ENCODE measurements at regions of chr10 and their contacts with region 1.

Region 1: GRCh38 chr10:44932517-44933450 is 21.6 kb downstream of the TMEM72 start:
- DNase-seq: peak; percentile 96
- H3K4me3 Mint-ChIP-seq: no peak overlapping the region
- H3K27ac Mint-ChIP-seq: no peak overlapping the region
- H3K4me1 Mint-ChIP-seq: peaks cover 7% of the 10 kb centered on the region
- H3K27me3 Mint-ChIP-seq: peaks cover 6% of the 10 kb centered on the region

Region 2: DNA sequence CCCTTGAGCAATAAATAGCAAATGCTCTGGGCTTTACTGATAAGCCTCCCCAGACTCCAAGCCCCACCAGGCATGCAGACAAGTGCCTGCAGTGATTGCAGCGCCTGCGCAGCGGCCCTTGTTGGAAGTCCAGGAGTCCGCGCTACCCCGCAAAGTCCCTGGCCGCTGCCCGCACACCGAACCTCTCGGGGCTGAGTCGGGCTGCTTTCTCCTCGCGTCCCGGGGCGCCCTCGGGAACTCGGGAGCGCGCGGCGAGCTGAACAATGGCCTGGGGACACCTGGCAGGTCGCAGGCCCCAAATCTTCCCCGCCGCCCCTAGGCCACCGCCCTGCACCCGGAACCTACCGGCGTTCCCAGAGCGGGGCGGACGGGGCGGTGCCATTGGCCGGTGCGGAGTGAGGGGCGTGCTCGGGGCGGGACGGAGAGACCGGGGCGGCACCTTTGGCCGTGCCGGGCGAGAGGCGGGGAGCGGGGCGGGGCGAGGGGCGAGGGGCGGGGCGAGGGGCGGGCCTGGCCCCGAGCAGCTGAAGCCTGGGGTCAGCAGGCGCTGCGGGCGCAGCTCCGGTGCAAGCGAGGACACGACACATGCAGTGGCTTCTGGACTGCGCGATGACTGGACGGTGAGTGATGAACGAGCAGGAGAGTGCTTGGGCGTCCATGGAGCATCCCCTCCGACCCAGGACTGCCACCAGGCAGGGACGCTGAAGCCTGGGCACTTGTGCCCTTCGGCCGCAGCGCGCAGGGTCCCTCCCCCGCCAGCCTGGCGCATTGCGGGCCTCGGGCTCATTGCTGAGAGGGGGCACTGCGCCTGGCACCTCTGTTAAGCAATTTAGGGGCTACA is 26.7 kb after region 1 on chr10 and contains the start of gene RASSF4:
- intact Hi-C with region 1: loop called (anchors 2 kb)
- DNase-seq: peak; percentile 99
- H3K4me3 Mint-ChIP-seq: peak within 1 kb of the TSS; percentile 84
- H3K27ac Mint-ChIP-seq: peak within 1 kb of the TSS; percentile 51
- H3K4me1 Mint-ChIP-seq: peaks cover 13% of the 10 kb centered on the region
- H3K27me3 Mint-ChIP-seq: no peaks in the 10 kb centered on the region
- total RNA-seq, gene RASSF4: 1.3 and 1.5 TPM in 2 replicates

Region 3: GRCh38 chr10:44974628-44975431 is 42.0 kb after region 1 on chr10:
- intact Hi-C with region 1: loop called (anchors 1 kb)
- DNase-seq: peak; percentile 93
- H3K4me3 Mint-ChIP-seq: peak overlapping the region; percentile 77
- H3K27ac Mint-ChIP-seq: peak overlapping the region; percentile 80
- H3K4me1 Mint-ChIP-seq: peaks cover 22% of the 10 kb centered on the region
- H3K27me3 Mint-ChIP-seq: no peaks in the 10 kb centered on the region

Region 4: DNA sequence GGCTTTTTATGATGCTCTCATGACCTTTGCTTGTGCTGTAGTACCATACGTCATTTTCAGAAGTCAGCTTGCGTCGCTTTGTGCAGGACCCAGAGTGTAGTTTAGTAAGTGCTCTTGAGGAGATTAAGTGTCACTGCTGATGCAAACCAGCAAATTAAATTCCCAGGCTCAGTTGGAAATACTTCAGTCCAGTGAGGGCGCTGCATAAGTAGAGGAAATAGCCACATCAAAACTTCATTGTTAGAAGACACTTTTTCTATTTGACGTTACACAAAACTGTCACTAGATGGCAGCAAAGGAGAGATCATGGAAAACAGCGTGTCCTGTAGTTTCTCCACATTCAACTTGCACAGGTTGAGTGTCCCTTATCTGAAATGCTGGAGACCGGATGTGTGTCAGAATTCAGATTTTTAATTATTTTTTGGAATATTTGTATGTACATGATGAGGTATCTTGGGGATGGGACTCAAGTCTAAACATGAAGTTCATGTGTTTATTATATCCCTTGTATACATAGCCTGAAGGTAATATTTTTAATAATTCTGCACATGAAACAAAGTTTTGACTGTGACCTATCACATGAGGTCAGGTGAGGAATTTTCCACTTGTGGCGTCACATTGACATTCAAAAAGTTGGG is 75.9 kb after region 1 on chr10:
- intact Hi-C with region 1: loop called (anchors 2 kb)
- DNase-seq: peak; percentile 81
- H3K4me3 Mint-ChIP-seq: no peak overlapping the region
- H3K27ac Mint-ChIP-seq: no peak overlapping the region
- H3K4me1 Mint-ChIP-seq: peaks cover 3% of the 10 kb centered on the region
- H3K27me3 Mint-ChIP-seq: peaks cover 3% of the 10 kb centered on the region

Region 5: DNA sequence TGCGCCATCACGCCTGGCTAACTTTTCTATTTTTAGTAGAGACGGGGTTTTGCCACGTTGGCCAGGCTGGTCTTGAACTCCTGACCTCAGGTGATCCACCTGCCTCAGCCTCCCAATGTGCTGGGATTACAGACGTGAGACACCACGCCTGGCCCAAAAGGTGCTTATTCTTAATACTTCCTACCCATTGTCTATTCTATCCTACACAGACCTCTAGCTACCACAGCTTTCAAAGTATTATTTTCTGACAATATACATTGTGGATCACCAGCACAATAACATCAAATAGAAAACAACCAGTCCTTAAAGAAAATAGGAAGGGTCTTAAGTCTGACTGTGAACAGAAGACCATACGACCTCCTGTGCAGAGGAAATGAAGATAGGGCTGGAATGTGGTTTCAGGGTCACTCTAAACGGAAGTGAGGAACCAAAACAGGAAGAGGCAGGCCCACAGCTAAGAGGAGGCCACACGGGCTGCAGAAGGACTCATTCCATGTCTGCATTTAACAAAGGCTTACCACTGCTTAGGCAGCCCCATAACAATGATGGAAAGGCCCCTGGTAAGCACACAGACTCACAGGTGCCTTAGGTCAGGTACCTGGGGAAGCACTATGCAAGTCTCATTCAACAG is 624.6 kb after region 1 on chr10:
- intact Hi-C with region 1: no loop called
- DNase-seq: peak; percentile 73
- H3K4me3 Mint-ChIP-seq: peak overlapping the region; percentile 73
- H3K27ac Mint-ChIP-seq: peak overlapping the region; percentile 85
- H3K4me1 Mint-ChIP-seq: peaks cover 27% of the 10 kb centered on the region
- H3K27me3 Mint-ChIP-seq: no peaks in the 10 kb centered on the region

Measured in activated CD4-positive, alpha-beta T cell treated with anti-CD3 and anti-CD28 coated beads, Interleukin-2, amount 10 ng/mL, durations not matched to agents 24 days and 14 days (primary cell).